ENCODE measurements at regions of chr7 and their contacts with region 1.

Region 1: GRCh38 chr7:19665399-19666008 is 43.3 kb downstream of the POLR1F start:
- DNase-seq: peak; percentile 50
- ATAC-seq: 0 out of 2 replicates have a peak, but pooled peaks have one; percentile 54
- H3K4me3 ChIP-seq: no peak overlapping the region
- H3K27ac ChIP-seq: no peak overlapping the region
- H3K4me1 ChIP-seq: no peaks in the 10 kb centered on the region
- H3K27me3 ChIP-seq: no peaks in the 10 kb centered on the region
- CTCF ChIP-seq: peak; percentile 67
- POLR2A ChIP-seq: no peak
- RAD21 ChIP-seq: peak; percentile 59

Region 2: DNA sequence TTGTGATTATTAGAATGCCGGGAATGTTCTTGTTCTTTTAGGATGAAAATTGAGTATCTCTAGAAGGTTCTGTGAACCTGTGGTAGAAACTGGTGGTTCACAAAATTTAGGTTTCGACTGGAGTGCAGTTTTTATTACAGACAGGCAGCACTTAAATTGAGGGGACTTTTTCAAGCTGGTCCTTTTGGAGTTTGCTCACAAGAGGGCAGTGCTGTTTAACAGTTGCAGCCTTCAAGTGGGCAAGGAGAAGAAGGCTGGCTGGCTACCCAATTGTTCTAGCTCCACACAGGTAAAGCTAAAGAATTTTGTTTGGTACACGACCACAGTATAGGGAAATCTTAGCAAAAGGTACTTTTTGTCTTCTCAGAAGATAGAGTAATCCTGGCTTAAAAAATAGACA is 1958.8 kb before region 1 on chr7:
- CTCF ChIA-PET with region 1: no interaction called
- POLR2A ChIA-PET with region 1: no interaction called
- dilution Hi-C with region 1: no loop called
- in situ Hi-C with region 1: loop called (anchors 25 kb)
- intact Hi-C with region 1: no loop called
- DNase-seq: peak; percentile 72
- ATAC-seq: peak; percentile 82
- H3K4me3 ChIP-seq: no peak overlapping the region
- H3K27ac ChIP-seq: no peak overlapping the region
- H3K4me1 ChIP-seq: no peaks in the 10 kb centered on the region
- H3K27me3 ChIP-seq: peaks cover 5% of the 10 kb centered on the region
- CTCF ChIP-seq: peak; percentile 77
- POLR2A ChIP-seq: no peak
- RAD21 ChIP-seq: peak; percentile 80

Region 3: DNA sequence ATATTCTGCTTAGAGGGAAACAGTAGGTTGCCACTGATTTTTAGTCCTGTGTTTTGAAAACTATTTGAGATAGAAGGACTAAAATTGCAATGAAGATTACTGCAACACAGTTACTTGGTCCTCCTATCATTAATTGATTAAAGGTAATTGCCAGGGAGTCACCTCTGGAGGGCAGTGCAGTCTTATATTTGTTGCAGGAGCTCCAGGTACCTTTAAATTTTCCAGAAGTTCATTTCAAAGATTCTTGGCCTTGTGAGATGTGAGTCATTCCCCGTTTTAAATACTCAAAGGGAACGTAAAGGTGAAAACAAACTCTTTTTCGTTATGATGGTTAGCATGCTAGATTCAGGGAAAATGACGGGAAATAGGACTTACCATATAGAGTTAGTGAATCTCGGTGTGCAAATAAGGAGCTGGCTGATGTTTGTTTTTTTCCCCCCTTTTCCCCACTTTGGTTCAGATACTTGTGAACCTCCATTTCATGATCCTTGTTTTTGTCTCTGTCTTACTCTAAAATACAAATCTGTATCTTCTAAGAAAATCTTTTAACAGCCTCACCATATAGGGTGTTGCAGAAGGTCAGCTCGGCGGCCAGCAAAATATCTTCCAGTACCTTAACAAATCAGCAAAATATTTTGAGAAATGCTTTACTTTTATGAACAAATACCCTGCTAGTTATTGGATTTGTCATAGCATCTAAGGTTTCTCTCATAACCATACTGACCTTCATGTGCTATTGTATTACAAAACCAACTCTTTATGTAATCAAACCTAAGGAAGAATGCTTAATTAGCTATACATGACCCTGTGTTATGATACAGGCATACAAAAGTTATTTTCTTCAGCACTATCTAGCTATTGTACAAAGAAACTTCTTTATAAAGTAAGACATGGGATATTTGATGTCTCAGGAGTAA is 1312.9 kb before region 1 on chr7:
- CTCF ChIA-PET with region 1: interaction called, 3 read pairs
- POLR2A ChIA-PET with region 1: no interaction called
- dilution Hi-C with region 1: no loop called
- in situ Hi-C with region 1: loop called (anchors 10 kb)
- intact Hi-C with region 1: loop called (anchors 5 kb)
- DNase-seq: peak; percentile 81
- ATAC-seq: peak; percentile 81
- H3K4me3 ChIP-seq: no peak overlapping the region
- H3K27ac ChIP-seq: no peak overlapping the region
- H3K4me1 ChIP-seq: peaks cover 9% of the 10 kb centered on the region
- H3K27me3 ChIP-seq: no peaks in the 10 kb centered on the region
- CTCF ChIP-seq: peak; percentile 82
- POLR2A ChIP-seq: no peak
- RAD21 ChIP-seq: peak; percentile 86

Region 4: DNA sequence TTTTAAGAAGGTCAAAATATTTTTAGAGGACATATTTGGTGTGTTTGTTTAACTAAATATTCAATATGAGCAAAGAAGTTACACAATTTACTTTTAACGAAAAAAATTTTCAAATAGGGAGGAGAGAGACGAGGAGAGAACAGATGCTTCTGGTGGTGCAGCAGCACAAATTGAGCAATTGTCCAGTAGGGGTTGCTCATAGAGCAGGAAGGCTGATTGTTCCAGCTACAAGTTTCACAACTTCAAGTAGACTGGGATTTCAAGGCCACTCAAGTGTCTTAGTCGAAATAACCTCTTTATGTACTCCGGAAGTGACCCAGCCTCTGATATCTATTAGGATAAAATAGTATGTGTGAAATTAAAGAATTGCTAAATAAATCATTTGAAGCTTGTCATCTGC is 972.1 kb before region 1 on chr7:
- CTCF ChIA-PET with region 1: no interaction called
- POLR2A ChIA-PET with region 1: no interaction called
- dilution Hi-C with region 1: no loop called
- in situ Hi-C with region 1: no loop called
- intact Hi-C with region 1: loop called (anchors 1 kb)
- DNase-seq: peak; percentile 89
- ATAC-seq: peak; percentile 95
- H3K4me3 ChIP-seq: no peak overlapping the region
- H3K27ac ChIP-seq: no peak overlapping the region
- H3K4me1 ChIP-seq: no peaks in the 10 kb centered on the region
- H3K27me3 ChIP-seq: no peaks in the 10 kb centered on the region
- CTCF ChIP-seq: peak; percentile 91
- POLR2A ChIP-seq: 0 out of 2 replicates have a peak, but pooled peaks have one; percentile 26
- RAD21 ChIP-seq: peak; percentile 92

Region 5: GRCh38 chr7:19491821-19492452 is 173.6 kb before region 1 on chr7:
- CTCF ChIA-PET with region 1: no interaction called
- POLR2A ChIA-PET with region 1: no interaction called
- dilution Hi-C with region 1: no loop called
- in situ Hi-C with region 1: no loop called
- intact Hi-C with region 1: loop called (anchors 10 kb)
- DNase-seq: peak; percentile 66
- ATAC-seq: peak; percentile 64
- H3K4me3 ChIP-seq: no peak overlapping the region
- H3K27ac ChIP-seq: no peak overlapping the region
- H3K4me1 ChIP-seq: no peaks in the 10 kb centered on the region
- H3K27me3 ChIP-seq: no peaks in the 10 kb centered on the region
- CTCF ChIP-seq: peak; percentile 75
- POLR2A ChIP-seq: no peak
- RAD21 ChIP-seq: peak; percentile 55